ENCODE measurements at regions of chr15 and their contacts with region 1.

Region 1: GRCh38 chr15:51649659-51650521 is 27.3 kb upstream of the DMXL2 start:
- DNase-seq: peak; percentile 75 to 85
- ATAC-seq: peak; percentile 96 to 99
- H3K4me3 ChIP-seq: no peak overlapping the region
- H3K27ac ChIP-seq: no peak overlapping the region
- H3K4me1 ChIP-seq: no peaks in the 10 kb centered on the region
- CTCF ChIP-seq: peak; percentile 98
- EP300 ChIP-seq: no peak
- POLR2A ChIP-seq: no peak
- RAD21 ChIP-seq: peak; percentile 97 to 99

Region 2: DNA sequence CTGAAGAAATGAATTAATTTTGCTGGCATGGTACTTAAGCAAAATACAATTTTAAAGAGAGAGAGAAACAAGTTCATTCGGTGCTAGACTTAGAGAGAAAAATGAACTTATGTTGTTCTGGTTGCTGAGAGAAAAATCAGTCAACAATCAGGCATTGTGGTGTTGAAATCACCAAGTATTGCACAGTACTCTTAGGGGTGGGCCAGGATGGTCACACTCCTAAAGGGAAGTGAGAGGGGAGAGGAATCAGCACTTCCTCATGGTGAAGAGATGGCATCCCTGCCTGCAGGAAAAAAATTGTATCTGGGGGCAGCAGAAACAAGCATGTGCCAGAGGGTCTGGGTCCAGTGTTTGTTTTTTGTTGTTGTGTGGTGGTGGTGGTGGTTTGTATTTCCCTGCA is 20.3 kb before region 1 on chr15:
- CTCF ChIA-PET with region 1: interaction called, 63 read pairs
- POLR2A ChIA-PET with region 1: no interaction called
- DNase-seq: no peak
- ATAC-seq: no peak; a peak in 1 of 6 replicates
- H3K4me3 ChIP-seq: no peak overlapping the region
- H3K27ac ChIP-seq: no peak overlapping the region
- H3K4me1 ChIP-seq: no peaks in the 10 kb centered on the region
- CTCF ChIP-seq: no peak
- EP300 ChIP-seq: no peak
- POLR2A ChIP-seq: no peak
- RAD21 ChIP-seq: no peak

Region 3: GRCh38 chr15:51672155-51672687 is 22.3 kb after region 1 on chr15:
- CTCF ChIA-PET with region 1: interaction called, 13 read pairs
- POLR2A ChIA-PET with region 1: no interaction called
- DNase-seq: no peak
- ATAC-seq: no peak
- H3K4me3 ChIP-seq: no peak overlapping the region
- H3K27ac ChIP-seq: no peak overlapping the region
- H3K4me1 ChIP-seq: no peaks in the 10 kb centered on the region
- CTCF ChIP-seq: no peak
- EP300 ChIP-seq: no peak
- POLR2A ChIP-seq: no peak
- RAD21 ChIP-seq: no peak

Region 4: GRCh38 chr15:51731549-51732267 is 81.8 kb after region 1 on chr15:
- CTCF ChIA-PET with region 1: interaction called, 34 read pairs
- POLR2A ChIA-PET with region 1: no interaction called
- DNase-seq: no peak
- ATAC-seq: no peak
- H3K4me3 ChIP-seq: no peak overlapping the region
- H3K27ac ChIP-seq: no peak overlapping the region
- H3K4me1 ChIP-seq: peaks cover 20% of the 10 kb centered on the region
- CTCF ChIP-seq: no peak
- EP300 ChIP-seq: no peak
- POLR2A ChIP-seq: no peak
- RAD21 ChIP-seq: no peak

Region 5: GRCh38 chr15:51756482-51756881 is 106.6 kb after region 1 on chr15:
- CTCF ChIA-PET with region 1: interaction called, 11 read pairs
- POLR2A ChIA-PET with region 1: no interaction called
- DNase-seq: no peak
- ATAC-seq: no peak
- H3K4me3 ChIP-seq: no peak overlapping the region
- H3K27ac ChIP-seq: no peak overlapping the region
- H3K4me1 ChIP-seq: peaks cover 3% of the 10 kb centered on the region; the same call in 1 of the 3 replicates
- CTCF ChIP-seq: no peak
- EP300 ChIP-seq: no peak
- POLR2A ChIP-seq: no peak
- RAD21 ChIP-seq: no peak

Region 6: DNA sequence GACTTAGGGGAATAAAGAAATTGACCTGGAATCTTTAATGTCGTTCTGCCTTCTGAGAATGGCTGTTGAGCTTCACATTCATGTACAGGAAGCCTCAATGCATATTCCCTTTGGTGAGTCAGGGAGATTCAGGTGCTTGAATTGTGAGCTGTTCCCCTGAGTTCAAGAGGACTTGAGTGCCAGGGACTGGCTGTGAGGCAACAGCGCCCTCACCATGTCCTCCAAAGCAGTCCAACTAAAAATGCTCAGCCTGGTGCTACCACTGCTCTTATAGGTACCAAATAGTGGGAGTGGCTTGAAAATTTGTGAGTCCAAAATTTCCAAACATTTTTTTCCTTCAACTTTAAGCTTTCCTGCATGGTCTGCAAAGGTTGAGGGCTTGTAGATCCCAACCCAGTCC is 267.6 kb after region 1 on chr15:
- CTCF ChIA-PET with region 1: interaction called, 12 read pairs
- POLR2A ChIA-PET with region 1: no interaction called
- DNase-seq: peak; percentile 44 to 89
- ATAC-seq: peak; percentile 95 to 99
- H3K4me3 ChIP-seq: no peak overlapping the region
- H3K27ac ChIP-seq: no peak overlapping the region
- H3K4me1 ChIP-seq: peaks cover 4% of the 10 kb centered on the region; the same call in 1 of the 3 replicates
- CTCF ChIP-seq: peak; percentile 76
- EP300 ChIP-seq: no peak
- POLR2A ChIP-seq: no peak
- RAD21 ChIP-seq: peak; percentile 77 to 88

Measured in A549 (cell line).